Right ventricle myocardium inferior (tissue), 1 donor: ENCODE measurements at regions of chr4 and their contacts with region 1.

Region 1: DNA sequence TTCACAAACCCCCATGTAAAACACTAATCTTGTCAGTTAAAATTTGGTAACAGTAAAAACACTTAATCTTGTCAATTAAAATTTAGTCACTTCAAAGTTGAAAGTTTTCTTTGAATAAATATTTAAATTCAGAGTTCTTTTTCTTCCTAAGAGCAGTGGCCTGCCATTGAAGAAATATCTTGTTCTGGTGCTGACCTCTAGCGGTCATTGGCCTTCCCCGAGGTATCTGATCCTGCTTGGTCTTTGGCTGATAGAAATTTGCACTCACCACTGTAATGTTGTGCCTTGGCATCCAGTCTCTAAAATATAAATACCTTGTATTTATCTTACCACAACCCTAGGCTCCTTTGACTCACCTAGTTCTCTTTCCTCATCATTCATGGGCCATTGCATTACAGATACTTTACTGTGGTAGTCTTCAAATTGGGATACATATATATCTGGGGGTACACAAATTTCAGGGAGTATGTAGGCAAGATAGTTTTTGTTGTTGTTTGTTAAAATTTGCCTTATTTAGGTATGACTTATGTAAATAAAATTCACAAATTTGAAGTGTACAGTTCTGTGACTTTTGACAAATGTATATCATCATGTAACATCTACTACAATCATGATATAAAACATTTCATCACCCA is 6.7 kb upstream of the ART3 start:
- DNase-seq: no peak
- ATAC-seq: peak; percentile 76

Region 2: GRCh38 chr4:75916091-75916661 is 151.6 kb before region 1 on chr4:
- intact Hi-C with region 1: loop called (anchors 10 kb)
- DNase-seq: no peak
- ATAC-seq: no peak

Region 3: GRCh38 chr4:75995727-75996126 is 72.0 kb before region 1 on chr4:
- intact Hi-C with region 1: loop called (anchors 1 kb)
- DNase-seq: no peak
- ATAC-seq: no peak